H1 (cell line): ENCODE measurements at regions of chr1 and their contacts with region 1.

Region 1: GRCh38 chr1:231983588-231984193 is 357.1 kb downstream of the DISC1 start:
- DNase-seq: no peak
- H3K4me3 ChIP-seq: no peak overlapping the region
- H3K27ac ChIP-seq: no peak overlapping the region
- H3K4me1 ChIP-seq: peaks cover 0 to 6% (median 2%) of the 10 kb centered on the region in 4 experiments; a peak in 4 of 7 replicates
- H3K27me3 ChIP-seq: no peaks in the 10 kb centered on the region
- CTCF ChIP-seq: peak in 2 of 3 experiments; percentile 28 to 34; a peak in 2 of 4 replicates
- EP300 ChIP-seq: no peak
- POLR2A ChIP-seq: no peak
- RAD21 ChIP-seq: peak; percentile 19 to 39; a peak in 3 of 4 replicates

Region 2: DNA sequence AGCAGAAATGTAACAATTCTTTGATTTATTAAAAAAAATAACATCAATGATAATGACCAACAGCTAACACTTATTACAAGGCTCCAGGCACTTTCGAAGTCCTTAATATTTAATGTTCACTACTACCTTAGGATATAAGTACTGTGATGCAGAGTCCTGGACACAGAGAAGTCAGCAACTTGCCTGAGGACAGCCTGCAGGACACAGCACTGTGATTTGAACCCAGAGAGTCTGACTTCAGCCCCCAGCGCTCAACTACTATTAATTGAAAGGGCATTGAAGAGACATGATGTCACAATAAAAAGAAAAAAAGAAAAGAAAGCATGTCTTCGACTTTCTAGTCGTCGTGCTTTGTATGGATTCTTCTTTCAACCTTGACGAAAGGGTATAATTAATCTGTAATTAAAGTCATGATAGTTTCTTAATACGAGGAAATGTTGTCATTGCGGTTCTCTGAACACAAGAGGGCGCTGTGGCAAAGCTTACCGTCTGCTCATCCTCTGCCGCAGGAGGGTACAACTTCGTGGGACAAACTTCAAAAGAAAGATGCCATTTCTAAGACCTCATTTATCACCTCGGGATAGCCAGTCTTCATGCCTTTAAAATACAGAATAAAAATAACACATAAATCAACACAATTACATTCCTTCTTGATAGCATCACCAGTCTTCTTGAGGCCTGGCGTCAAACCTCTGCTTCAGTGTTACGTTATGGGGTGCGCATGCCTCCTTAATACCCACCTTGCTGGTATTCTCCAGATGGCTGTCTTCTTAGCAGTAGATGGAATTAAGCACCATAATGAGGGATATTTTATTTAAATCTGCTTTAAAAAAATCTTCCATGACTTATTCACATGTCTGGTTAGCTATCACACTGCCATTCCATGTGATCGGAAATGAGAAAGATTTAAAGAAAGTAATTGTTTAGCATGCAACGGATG is 117.0 kb before region 1 on chr1:
- CTCF ChIA-PET with region 1: interaction called, 13 read pairs
- POLR2A ChIA-PET with region 1: no interaction called
- DNase-seq: peak; percentile 19 to 71
- H3K4me3 ChIP-seq: no peak overlapping the region
- H3K27ac ChIP-seq: no peak overlapping the region
- H3K4me1 ChIP-seq: peaks cover 0 to 8% (median 3%) of the 10 kb centered on the region in 4 experiments; a peak in 4 of 7 replicates
- H3K27me3 ChIP-seq: peaks cover 0 to 2% (median 0%) of the 10 kb centered on the region in 4 experiments; a peak in 1 of 7 replicates
- CTCF ChIP-seq: peak; percentile 65 to 83 (median 78)
- EP300 ChIP-seq: no peak
- POLR2A ChIP-seq: no peak
- RAD21 ChIP-seq: peak; percentile 94 to 96